ENCODE measurements at regions of chr9 and their contacts with region 1.

Region 1: DNA sequence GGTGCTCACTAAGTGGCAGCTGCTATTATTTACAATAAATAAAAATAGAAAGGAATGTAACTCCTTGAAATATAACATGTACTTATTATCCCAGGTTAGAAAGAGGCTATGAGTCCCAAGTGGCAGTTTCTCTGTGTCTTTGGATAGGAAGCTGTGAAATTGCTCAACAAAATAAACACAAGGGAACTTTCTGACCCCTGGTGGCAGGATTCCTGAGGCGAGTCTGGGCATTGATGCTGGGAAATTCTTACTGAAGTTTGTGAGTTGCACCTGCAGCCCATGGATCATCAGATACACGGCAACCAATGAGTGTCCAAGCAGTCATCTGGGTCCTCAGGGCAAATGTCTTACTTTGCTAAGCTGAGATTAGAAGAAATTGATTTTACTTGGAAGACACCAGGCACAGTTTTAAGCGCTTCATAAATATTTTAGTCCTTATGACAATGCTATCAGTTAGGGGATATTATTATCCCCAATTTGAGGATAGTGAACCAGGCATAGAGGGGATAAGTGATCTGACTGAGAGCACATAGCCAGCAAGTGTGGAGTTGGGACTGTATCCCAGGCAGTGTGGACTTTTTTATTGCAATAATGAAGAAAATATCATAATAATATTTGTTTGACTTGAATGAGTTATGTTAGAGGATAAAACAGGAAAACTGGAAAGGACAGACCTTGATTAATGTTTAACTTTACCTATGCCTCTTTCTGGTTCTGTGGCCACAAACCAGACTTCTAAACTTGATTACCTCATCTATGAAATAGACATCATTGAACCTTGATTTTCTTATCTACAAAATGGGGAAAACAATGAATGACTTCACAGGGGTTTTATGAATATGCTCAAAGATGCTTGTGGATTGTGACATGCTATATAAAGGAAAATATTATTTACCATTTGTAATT is 265.5 kb upstream of the ADAMTSL1 start:
- DNase-seq: no peak
- H3K4me3 Mint-ChIP-seq: no peak overlapping the region
- H3K27ac Mint-ChIP-seq: no peak overlapping the region
- H3K4me1 Mint-ChIP-seq: peaks cover 3% of the 10 kb centered on the region
- H3K27me3 Mint-ChIP-seq: no peaks in the 10 kb centered on the region

Region 2: DNA sequence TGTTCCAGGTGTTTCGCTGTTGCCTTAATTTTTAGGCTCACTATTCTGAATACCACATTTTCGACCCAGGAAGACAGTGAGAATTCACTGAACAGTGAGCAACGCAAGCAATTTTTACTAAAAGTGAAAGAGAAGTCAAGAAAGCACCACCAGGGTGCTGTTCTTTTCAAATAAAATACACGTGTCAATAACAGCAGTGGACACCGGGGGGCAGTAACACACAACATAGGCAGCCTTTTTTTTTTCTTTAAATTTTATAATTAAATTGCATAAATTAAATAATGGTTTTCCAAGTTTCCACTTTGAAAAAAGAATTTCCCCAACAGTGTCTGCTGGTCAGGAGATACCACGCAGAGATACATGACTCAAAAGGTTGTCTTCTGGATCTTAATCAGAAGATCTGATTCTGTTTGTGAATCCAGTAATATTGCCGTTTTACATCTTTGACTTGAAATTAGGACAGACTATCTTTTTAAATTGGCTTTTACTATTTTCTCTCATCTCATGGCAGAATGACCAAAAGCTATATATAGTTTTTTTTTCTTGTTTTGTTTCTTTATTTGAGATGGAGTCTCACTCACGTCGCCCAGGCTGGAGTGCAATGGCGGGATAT is 676.7 kb before region 1 on chr9:
- intact Hi-C with region 1: loop called (anchors 2 kb)
- DNase-seq: no peak
- H3K4me3 Mint-ChIP-seq: no peak overlapping the region
- H3K27ac Mint-ChIP-seq: no peak overlapping the region
- H3K4me1 Mint-ChIP-seq: no peaks in the 10 kb centered on the region
- H3K27me3 Mint-ChIP-seq: peaks cover 1% of the 10 kb centered on the region

Region 3: GRCh38 chr9:17810728-17811571 is 397.5 kb before region 1 on chr9:
- intact Hi-C with region 1: loop called (anchors 1 kb)
- DNase-seq: peak; percentile 9
- H3K4me3 Mint-ChIP-seq: no peak overlapping the region
- H3K27ac Mint-ChIP-seq: no peak overlapping the region
- H3K4me1 Mint-ChIP-seq: no peaks in the 10 kb centered on the region
- H3K27me3 Mint-ChIP-seq: no peaks in the 10 kb centered on the region

Region 4: DNA sequence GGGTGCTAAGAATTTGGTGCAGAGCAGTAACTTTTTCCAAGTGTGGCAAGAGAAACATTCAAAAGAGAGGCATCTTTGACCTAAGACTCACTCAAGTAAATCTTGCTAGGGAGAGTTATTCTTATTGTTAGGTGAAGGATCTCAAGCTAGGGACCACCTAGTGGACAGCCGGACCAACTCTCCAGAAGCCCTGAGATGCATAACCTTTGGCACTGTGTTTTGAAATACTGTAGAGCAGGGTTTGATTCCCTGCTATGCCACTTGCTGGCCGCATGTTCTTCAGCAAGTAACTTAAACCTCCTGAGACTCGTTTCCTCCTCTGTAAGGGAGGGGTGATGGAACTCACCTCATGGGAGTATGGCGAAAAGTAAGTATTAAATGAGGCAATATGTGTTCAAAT is 70.6 kb before region 1 on chr9:
- intact Hi-C with region 1: no loop called
- DNase-seq: no peak
- H3K4me3 Mint-ChIP-seq: no peak overlapping the region
- H3K27ac Mint-ChIP-seq: no peak overlapping the region
- H3K4me1 Mint-ChIP-seq: no peaks in the 10 kb centered on the region
- H3K27me3 Mint-ChIP-seq: no peaks in the 10 kb centered on the region

Region 5: DNA sequence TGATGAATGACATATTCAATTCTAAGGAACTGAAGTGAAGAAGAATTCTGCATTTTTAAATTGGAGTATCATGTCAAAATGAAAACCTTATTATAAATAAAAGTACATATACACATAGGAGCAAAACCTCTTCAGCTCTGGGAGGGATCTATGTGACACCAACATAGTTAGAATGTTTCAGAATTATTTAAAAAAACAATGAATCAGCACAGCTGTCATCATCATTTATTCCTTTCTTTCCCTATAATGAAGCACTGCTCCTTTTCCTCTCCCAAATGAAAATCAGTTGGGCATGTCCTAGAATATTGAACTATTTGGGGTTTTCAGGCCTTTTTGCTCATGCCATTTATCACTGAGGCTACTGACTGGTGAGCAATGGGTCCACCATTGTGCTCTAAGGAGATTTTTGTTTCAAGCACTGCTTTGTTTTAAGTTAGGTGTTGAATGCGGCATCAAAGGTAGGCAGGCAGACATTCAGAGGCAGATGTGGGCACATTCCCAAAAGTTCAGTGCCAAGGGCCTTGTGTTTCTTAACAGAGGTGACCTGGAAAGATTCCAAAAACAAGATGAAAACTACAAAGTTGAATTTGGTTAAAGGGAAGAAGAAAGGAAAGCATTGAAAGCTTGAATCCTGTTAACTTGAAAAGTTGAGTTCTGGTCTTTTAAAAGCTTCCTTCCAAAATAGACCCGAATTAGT is 139.1 kb after region 1 on chr9:
- intact Hi-C with region 1: no loop called
- DNase-seq: no peak
- H3K4me3 Mint-ChIP-seq: no peak overlapping the region
- H3K27ac Mint-ChIP-seq: no peak overlapping the region
- H3K4me1 Mint-ChIP-seq: no peaks in the 10 kb centered on the region
- H3K27me3 Mint-ChIP-seq: no peaks in the 10 kb centered on the region

Measured in activated T-helper 1 cell treated with anti-CD3 and anti-CD28 coated beads, Interleukin-12 subunit alpha, Interleukin-12 subunit beta, Interleukin-2, Interleukin-4 antibody, amounts not matched to agents 30 ng/mL and 10 ng/mL and 1 ng/mL, durations not matched to agents 14 hours and 24 hours and 36 hours (primary cell).